ENCODE measurements at regions of chr7 and their contacts with region 1.

Region 1: DNA sequence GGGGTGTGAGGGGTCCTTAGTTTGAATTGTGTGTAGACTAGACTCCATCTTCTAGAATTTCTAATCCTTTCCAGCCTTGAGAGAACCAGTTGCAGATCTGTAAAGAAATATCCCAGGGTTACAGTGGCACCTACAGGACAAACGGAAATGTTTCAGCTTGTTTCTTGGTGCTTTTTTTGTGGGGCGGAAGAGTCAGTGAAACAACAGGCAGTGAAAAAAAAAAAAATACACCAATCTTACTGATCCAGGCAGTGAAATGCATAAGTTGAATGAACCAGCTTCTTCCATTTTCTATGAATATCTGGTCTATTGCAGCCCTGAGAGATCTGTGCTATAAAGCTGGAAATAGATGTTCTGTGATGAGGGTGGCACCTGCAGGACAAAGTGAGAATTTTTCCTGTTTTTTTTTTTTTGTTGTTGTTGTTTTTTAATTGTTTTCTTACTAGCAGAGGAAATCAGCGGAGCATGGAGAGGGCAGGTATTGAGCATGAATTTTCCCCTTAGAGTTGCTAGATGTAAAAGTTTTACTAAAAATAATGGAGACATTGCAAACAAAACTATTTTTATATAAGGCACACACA is 81.9 kb upstream of the DYNC1I1 start:
- DNase-seq: peak; percentile 6 to 73
- ATAC-seq: peak; percentile 74 to 79
- H3K4me3 ChIP-seq: peak overlapping the region; percentile 12; the same call in 1 of the 3 replicates
- H3K27ac ChIP-seq: peak overlapping the region; percentile 27 to 53; a peak in 3 of 6 replicates
- H3K4me1 ChIP-seq: peaks cover 23% of the 10 kb centered on the region; the same call in 2 of the 3 replicates
- CTCF ChIP-seq: peak; percentile 99
- EP300 ChIP-seq: no peak
- POLR2A ChIP-seq: no peak
- RAD21 ChIP-seq: peak; percentile 62 to 87

Region 2: GRCh38 chr7:94449148-94449725 is 1241.2 kb before region 1 on chr7:
- CTCF ChIA-PET with region 1: interaction called, 41 read pairs
- POLR2A ChIA-PET with region 1: no interaction called
- DNase-seq: peak; percentile 28 to 57
- ATAC-seq: 0 out of 6 replicates have a peak, but pooled peaks of 1 of the 2 experiments have one; percentile 36
- H3K4me3 ChIP-seq: no peak overlapping the region
- H3K27ac ChIP-seq: no peak overlapping the region
- H3K4me1 ChIP-seq: no peaks in the 10 kb centered on the region
- CTCF ChIP-seq: peak; percentile 77
- EP300 ChIP-seq: no peak
- POLR2A ChIP-seq: no peak
- RAD21 ChIP-seq: peak; percentile 85 to 91

Region 3: GRCh38 chr7:95491634-95492320 is 198.7 kb before region 1 on chr7:
- CTCF ChIA-PET with region 1: interaction called, 30 read pairs
- POLR2A ChIA-PET with region 1: no interaction called
- DNase-seq: peak in 1 of 2 experiments; percentile 34
- ATAC-seq: peak; percentile 24 to 51; a peak in 3 of 6 replicates
- H3K4me3 ChIP-seq: no peak overlapping the region
- H3K27ac ChIP-seq: peak overlapping the region; percentile 19 to 75; a peak in 5 of 6 replicates
- H3K4me1 ChIP-seq: peaks cover 45% of the 10 kb centered on the region
- CTCF ChIP-seq: no peak
- EP300 ChIP-seq: no peak
- POLR2A ChIP-seq: no peak
- RAD21 ChIP-seq: no peak

Region 4: DNA sequence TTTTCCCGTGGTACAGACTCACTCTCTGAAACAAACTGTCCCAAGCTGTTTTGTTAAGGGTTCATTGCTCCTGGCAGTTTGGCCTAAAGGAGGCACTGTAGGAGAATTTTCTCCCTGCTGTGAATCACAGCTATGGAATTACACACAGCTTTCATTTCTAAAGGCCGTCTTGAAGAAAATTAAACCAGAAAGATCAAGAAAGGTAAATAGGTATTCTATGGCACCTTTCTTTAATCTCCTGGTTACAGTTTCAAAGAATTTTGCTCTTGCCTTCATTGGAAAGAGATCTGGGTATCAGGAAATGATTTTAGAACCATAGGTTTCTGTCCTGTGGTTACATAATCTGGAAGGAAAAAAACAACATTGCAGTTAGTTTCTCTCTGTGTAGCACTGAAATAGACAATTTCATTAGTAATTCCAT is 145.4 kb before region 1 on chr7:
- CTCF ChIA-PET with region 1: interaction called, 146 read pairs
- POLR2A ChIA-PET with region 1: interaction called, 9 read pairs
- DNase-seq: peak; percentile 68 to 71
- ATAC-seq: peak; percentile 92 to 95
- H3K4me3 ChIP-seq: peak overlapping the region; percentile 34
- H3K27ac ChIP-seq: peak overlapping the region; percentile 67
- H3K4me1 ChIP-seq: peaks cover 24% of the 10 kb centered on the region
- CTCF ChIP-seq: peak; percentile 70
- EP300 ChIP-seq: no peak
- POLR2A ChIP-seq: no peak
- RAD21 ChIP-seq: peak; percentile 73 to 76

Region 5: DNA sequence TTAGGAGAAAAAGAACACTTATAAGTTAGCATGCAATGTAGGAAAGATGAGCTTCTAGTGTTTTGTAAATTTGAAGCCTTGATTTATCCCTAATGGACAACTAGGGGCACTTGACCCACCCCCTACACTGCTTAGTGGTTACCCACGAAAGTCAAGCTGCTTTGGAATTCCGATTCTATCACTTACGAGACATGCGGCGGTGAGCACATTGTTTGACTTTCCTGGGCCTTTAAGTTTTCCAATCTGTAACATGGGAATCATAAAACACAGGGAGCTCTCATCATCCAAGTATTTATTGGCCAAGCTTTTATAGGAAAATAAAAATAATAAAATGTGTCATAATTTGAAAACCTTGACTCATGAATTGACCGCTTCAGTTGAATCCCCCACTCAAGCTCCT is 15.4 kb before region 1 on chr7:
- CTCF ChIA-PET with region 1: interaction called, 84 read pairs
- POLR2A ChIA-PET with region 1: no interaction called
- DNase-seq: no peak
- ATAC-seq: no peak
- H3K4me3 ChIP-seq: no peak overlapping the region
- H3K27ac ChIP-seq: no peak overlapping the region
- H3K4me1 ChIP-seq: no peaks in the 10 kb centered on the region
- CTCF ChIP-seq: no peak
- EP300 ChIP-seq: no peak
- POLR2A ChIP-seq: no peak
- RAD21 ChIP-seq: no peak

Region 6: GRCh38 chr7:95758187-95758586 is 67.7 kb after region 1 on chr7:
- CTCF ChIA-PET with region 1: no interaction called
- POLR2A ChIA-PET with region 1: no interaction called
- DNase-seq: no peak
- ATAC-seq: no peak
- H3K4me3 ChIP-seq: no peak overlapping the region
- H3K27ac ChIP-seq: no peak overlapping the region
- H3K4me1 ChIP-seq: no peaks in the 10 kb centered on the region
- CTCF ChIP-seq: no peak
- EP300 ChIP-seq: no peak
- POLR2A ChIP-seq: no peak
- RAD21 ChIP-seq: no peak

Measured in A549 (cell line).